ENCODE measurements at regions of chr6 and their contacts with region 1.

Region 1: DNA sequence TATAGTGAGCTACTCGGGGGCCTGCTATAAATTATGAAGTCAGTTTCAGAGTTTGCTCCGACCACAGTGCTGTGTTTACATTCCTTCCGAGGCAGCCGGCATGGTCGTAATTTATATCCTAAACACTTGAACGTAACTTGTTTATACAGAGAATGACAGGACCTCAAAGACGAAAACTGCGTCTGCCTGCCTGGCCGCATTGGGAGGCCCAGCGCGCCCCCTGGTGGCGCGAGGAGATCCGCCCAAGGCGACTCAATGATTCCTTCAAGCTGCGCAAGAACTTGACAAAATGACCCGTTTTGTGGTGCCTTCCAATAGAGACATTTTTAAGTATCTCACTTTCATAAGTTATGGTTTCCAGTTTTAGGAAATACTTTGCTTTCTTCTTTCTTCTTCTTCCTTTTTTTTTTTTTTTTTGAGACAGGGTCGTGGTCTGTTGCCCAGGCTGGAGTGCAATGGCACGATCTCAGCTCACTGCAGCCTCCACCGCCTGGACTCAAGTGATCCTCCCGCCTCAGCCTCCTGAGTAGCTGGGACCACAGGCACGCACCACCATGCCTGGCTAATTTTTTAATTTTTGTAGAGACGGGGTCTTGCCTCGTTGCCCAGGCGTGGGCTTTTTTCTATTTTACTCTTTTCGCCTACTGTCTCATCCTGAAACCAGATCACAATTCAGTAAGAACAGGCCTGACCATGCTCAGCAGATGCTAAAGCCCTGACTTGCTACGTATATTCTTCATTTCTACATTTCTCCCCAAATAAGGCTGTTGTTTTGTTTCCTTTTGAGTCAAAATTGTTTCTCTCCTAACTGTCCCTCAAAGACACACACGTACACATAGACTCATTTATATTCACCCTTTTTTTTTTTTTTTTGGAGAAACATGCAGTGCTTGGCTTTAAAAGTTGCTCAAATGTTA is 7.8 kb downstream of the FOXF2 start:
- H3K4me3 ChIP-seq: no peak overlapping the region
- H3K27ac ChIP-seq: no peak overlapping the region
- H3K4me1 ChIP-seq: peaks cover 12% of the 10 kb centered on the region
- CTCF ChIP-seq: peak; percentile 90

Region 2: GRCh38 chr6:894274-894673 is 502.9 kb before region 1 on chr6:
- CTCF ChIA-PET with region 1: no interaction called
- POLR2A ChIA-PET with region 1: no interaction called
- H3K4me3 ChIP-seq: no peak overlapping the region
- H3K27ac ChIP-seq: no peak overlapping the region
- H3K4me1 ChIP-seq: no peaks in the 10 kb centered on the region
- CTCF ChIP-seq: no peak

Region 3: DNA sequence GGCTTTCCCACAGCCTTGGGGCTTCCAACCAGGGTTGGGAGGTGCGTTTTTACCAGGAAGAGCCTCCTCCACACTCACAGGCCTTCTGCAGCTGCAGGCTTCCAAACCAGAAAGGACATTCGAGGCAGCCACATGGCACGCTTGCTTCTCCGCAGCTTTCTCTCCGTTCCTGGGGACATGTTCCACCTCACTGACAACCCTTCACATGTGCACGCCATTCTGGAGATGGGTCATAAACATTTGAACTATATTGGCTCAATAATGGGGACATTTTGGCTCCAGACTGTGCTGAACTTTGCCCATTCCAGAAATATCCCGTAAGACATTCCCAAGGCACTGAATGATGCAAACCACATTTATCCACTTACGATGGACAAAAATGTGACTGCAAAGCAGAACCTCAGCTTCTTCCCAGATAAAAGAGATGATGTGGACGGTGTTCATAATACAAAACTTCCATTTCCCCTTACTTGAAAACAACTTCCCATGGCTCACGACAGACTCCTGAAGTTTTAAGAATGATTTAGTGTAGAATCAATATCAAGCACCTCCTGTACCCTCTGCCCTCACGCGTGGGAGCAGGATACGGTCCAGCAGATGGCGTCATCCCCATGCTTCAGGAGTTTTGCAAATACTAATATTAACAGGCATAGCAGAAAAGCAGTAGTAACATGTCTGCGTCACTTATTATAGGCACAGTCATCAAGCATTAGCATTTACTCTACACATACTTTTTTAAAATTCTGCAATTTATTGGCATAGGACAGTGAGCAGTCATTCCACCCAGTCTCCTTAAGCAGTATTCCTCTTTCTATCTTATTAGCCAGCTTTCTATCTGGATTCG is 33.3 kb before region 1 on chr6:
- CTCF ChIA-PET with region 1: interaction called, 15 read pairs
- POLR2A ChIA-PET with region 1: no interaction called
- H3K4me3 ChIP-seq: no peak overlapping the region
- H3K27ac ChIP-seq: no peak overlapping the region
- H3K4me1 ChIP-seq: no peaks in the 10 kb centered on the region
- CTCF ChIP-seq: peak; percentile 37; the same call in 1 of the 2 replicates

Region 4: DNA sequence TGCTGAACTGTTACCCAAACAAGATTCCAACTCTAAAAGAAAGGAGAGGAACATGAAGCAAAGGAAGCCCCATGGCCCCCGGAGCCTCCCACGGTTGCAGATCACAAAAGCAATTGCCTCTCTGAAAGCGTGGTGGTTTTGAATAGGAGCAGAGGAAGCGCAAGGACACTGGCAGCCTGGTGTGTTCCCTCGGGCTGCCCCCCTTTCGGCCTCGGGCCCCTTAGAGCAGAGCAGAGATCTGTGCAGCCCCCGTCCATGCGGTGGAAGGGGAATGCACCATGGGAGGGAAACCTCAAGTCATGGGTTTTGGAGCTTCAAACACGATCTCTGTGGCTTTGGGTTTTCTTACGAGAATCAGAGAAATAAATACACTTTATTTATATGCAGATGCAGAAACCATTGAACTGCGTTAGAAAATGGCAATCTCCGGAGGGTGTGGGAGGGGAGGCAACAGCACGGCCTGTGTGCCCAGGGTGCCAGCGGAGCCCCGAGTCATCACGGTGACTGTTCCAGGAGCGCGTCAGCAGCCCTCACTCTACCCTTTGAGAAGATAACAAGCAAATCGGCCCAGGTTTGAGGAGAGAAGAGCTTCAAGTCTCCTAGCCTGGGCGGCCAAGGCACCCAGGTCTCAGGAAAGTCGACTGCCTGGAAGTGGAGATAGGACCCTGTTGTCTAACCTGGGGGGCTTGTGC is 12.7 kb after region 1 on chr6:
- CTCF ChIA-PET with region 1: interaction called, 18 read pairs
- POLR2A ChIA-PET with region 1: no interaction called
- H3K4me3 ChIP-seq: no peak overlapping the region
- H3K27ac ChIP-seq: no peak overlapping the region
- H3K4me1 ChIP-seq: no peaks in the 10 kb centered on the region
- CTCF ChIP-seq: no peak

Region 5: DNA sequence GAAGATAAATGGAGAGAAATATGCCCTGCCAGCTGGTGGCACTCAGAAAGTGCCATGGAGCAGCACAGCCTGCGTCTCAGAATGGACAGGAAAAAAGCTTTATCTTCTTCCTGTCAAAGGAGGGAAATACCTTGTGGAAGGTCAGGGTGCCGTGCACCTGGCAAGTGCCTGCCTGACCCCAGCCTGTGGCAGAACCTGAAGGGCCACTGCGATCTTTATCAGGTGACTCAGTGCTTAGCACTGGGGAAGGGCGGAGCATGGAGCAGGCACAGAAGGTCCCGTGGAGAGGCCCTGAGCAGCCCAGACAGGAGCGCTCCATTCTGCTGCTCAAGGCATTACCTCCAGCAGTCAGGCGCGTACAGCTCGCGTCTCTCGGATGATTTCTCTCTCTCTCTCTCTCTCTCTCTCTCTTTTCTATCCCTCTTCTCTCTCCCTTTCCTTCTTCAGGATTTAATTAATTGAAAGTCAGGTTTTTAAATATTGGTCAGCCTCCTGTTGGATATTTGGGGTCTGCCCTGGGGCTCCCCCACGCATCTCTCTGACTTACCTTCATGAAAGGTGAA is 244.2 kb after region 1 on chr6:
- CTCF ChIA-PET with region 1: no interaction called
- POLR2A ChIA-PET with region 1: no interaction called
- H3K4me3 ChIP-seq: no peak overlapping the region
- H3K27ac ChIP-seq: no peak overlapping the region
- H3K4me1 ChIP-seq: peaks cover 4% of the 10 kb centered on the region; the same call in 1 of the 2 replicates
- CTCF ChIP-seq: no peak